ENCODE measurements at regions of chr2 and their contacts with region 1.

Region 1: GRCh38 chr2:88307817-88308216 is 137.7 kb downstream of the THNSL2 start:
- DNase-seq: peak; percentile 29
- H3K4me3 ChIP-seq: no peak overlapping the region
- H3K27ac ChIP-seq: no peak overlapping the region
- H3K4me1 ChIP-seq: no peaks in the 10 kb centered on the region
- H3K27me3 ChIP-seq: no peaks in the 10 kb centered on the region
- CTCF ChIP-seq: peak; percentile 51 to 71

Region 2: GRCh38 chr2:88212251-88212790 is 95.5 kb before region 1 on chr2:
- CTCF ChIA-PET with region 1: no interaction called
- dilution Hi-C with region 1: no loop called
- in situ Hi-C with region 1: no loop called
- intact Hi-C with region 1: loop called (anchors 5 kb)
- DNase-seq: peak; percentile 16
- H3K4me3 ChIP-seq: no peak overlapping the region
- H3K27ac ChIP-seq: no peak overlapping the region
- H3K4me1 ChIP-seq: no peaks in the 10 kb centered on the region
- H3K27me3 ChIP-seq: peaks cover 3% of the 10 kb centered on the region
- CTCF ChIP-seq: peak; percentile 82 to 87

Region 3: GRCh38 chr2:88258208-88258607 is 49.6 kb before region 1 on chr2:
- CTCF ChIA-PET with region 1: no interaction called
- dilution Hi-C with region 1: no loop called
- in situ Hi-C with region 1: no loop called
- intact Hi-C with region 1: loop called (anchors 10 kb)
- DNase-seq: peak; percentile 87
- H3K4me3 ChIP-seq: no peak overlapping the region
- H3K27ac ChIP-seq: no peak overlapping the region
- H3K4me1 ChIP-seq: peaks cover 12% of the 10 kb centered on the region
- H3K27me3 ChIP-seq: no peaks in the 10 kb centered on the region
- CTCF ChIP-seq: no peak

Region 4: DNA sequence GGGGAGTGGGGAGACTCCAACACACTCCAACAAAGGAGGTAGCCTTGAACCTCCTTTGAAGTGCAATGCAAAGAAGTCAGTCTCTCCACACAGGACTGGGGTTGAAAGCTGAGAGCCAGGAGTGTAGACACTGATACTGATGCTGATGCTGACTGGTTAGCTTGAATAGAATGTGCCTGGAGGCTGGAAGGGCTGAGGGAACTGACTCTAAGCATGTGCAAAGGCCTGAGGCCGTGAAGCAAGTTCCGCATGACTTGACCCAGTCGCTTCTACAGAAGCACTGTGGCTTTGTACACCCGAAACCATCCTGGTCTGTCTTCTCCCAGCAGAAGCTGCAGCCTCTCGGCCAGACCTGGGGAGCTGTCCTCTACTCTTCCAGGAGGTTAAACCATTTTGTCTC is 134.2 kb after region 1 on chr2:
- CTCF ChIA-PET with region 1: no interaction called
- dilution Hi-C with region 1: no loop called
- in situ Hi-C with region 1: no loop called
- intact Hi-C with region 1: no loop called
- DNase-seq: no peak
- H3K4me3 ChIP-seq: no peak overlapping the region
- H3K27ac ChIP-seq: no peak overlapping the region
- H3K4me1 ChIP-seq: no peaks in the 10 kb centered on the region
- H3K27me3 ChIP-seq: no peaks in the 10 kb centered on the region
- CTCF ChIP-seq: no peak

Measured in mammary epithelial cell (primary cell).